ENCODE measurements at regions of chr3 and their contacts with region 1.

Region 1: GRCh38 chr3:40179016-40179415 is 130.5 kb upstream of the EIF1B start:
- DNase-seq: peak; percentile 59 to 83 (median 80)
- H3K4me3 ChIP-seq: no peak overlapping the region
- H3K27ac ChIP-seq: no peak overlapping the region
- H3K4me1 ChIP-seq: no peaks in the 10 kb centered on the region
- H3K27me3 ChIP-seq: no peaks in the 10 kb centered on the region
- CTCF ChIP-seq: peak; percentile 49 to 71 (median 64)
- EP300 ChIP-seq: no peak
- POLR2A ChIP-seq: no peak

Region 2: GRCh38 chr3:39447637-39448483 is 731.2 kb before region 1 on chr3:
- intact Hi-C with region 1: loop called in 2 of 4 experiments (anchors 10 kb)
- DNase-seq: peak; percentile 45 to 76 (median 54)
- H3K4me3 ChIP-seq: no peak overlapping the region
- H3K27ac ChIP-seq: no peak overlapping the region
- H3K4me1 ChIP-seq: no peaks in the 10 kb centered on the region
- H3K27me3 ChIP-seq: no peaks in the 10 kb centered on the region
- CTCF ChIP-seq: peak; percentile 53 to 79 (median 66)
- EP300 ChIP-seq: no peak
- POLR2A ChIP-seq: no peak

Region 3: GRCh38 chr3:39453134-39453533 is 725.9 kb before region 1 on chr3:
- intact Hi-C with region 1: loop called in 2 of 4 experiments (anchors 10 kb)
- DNase-seq: no peak
- H3K4me3 ChIP-seq: no peak overlapping the region
- H3K27ac ChIP-seq: no peak overlapping the region
- H3K4me1 ChIP-seq: no peaks in the 10 kb centered on the region
- H3K27me3 ChIP-seq: no peaks in the 10 kb centered on the region
- CTCF ChIP-seq: no peak
- EP300 ChIP-seq: no peak
- POLR2A ChIP-seq: no peak

Region 4: DNA sequence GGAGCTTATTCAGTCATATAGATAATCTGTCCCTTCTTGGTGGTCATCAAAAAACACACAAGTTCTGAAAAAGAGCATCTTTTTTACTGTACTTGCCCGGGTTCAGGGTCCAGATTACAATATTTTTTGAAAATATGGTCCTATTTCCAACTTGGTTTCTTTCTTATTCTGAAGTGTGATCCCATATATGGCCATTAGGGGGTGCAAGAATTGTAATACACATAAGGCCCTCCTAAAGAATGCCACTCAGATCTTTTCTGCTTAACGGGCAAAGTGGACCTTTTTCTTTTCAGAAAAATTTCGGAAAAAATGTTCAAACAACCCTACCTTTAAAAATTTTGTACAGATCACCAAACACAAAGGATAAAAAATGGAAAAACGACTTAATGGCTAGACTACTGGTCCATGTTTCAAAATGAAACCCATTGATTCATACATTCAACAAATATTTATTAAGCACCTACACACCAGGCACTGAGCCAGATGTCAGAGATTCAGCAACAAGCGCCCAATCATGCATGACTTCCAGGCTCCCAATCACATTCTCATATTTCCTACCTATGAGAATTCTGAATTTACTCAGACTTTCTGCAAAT is 471.6 kb before region 1 on chr3:
- intact Hi-C with region 1: loop called in 3 of 4 experiments (anchors 5 to 10 kb)
- DNase-seq: no peak
- H3K4me3 ChIP-seq: no peak overlapping the region
- H3K27ac ChIP-seq: no peak overlapping the region
- H3K4me1 ChIP-seq: no peaks in the 10 kb centered on the region
- H3K27me3 ChIP-seq: no peaks in the 10 kb centered on the region
- CTCF ChIP-seq: peak in 2 of 3 donors; percentile 16 to 51
- EP300 ChIP-seq: no peak
- POLR2A ChIP-seq: no peak

Measured in ovary (tissue), 10 donors.